ENCODE measurements at regions of chr12 and their contacts with region 1.

Region 1: GRCh38 chr12:10749700-10750384 is 26.7 kb upstream of the YBX3 start:
- DNase-seq: peak; percentile 66 to 90
- ATAC-seq: peak; percentile 96
- H3K4me3 ChIP-seq: peak overlapping the region; percentile 37; the same call in 2 of the 3 replicates
- H3K27ac ChIP-seq: peak overlapping the region; percentile 24 to 59; a peak in 2 of 6 replicates
- H3K4me1 ChIP-seq: no peaks in the 10 kb centered on the region
- CTCF ChIP-seq: peak; percentile 99
- EP300 ChIP-seq: no peak
- POLR2A ChIP-seq: no peak
- RAD21 ChIP-seq: peak; percentile 86 to 89

Region 2: GRCh38 chr12:10701131-10701681 is 48.6 kb before region 1 on chr12:
- CTCF ChIA-PET with region 1: interaction called, 11 read pairs
- POLR2A ChIA-PET with region 1: no interaction called
- DNase-seq: no peak
- ATAC-seq: peak; percentile 27 to 33; a peak in 2 of 6 replicates
- H3K4me3 ChIP-seq: no peak overlapping the region
- H3K27ac ChIP-seq: no peak overlapping the region
- H3K4me1 ChIP-seq: no peaks in the 10 kb centered on the region
- CTCF ChIP-seq: no peak
- EP300 ChIP-seq: no peak
- POLR2A ChIP-seq: no peak
- RAD21 ChIP-seq: no peak

Region 3: DNA sequence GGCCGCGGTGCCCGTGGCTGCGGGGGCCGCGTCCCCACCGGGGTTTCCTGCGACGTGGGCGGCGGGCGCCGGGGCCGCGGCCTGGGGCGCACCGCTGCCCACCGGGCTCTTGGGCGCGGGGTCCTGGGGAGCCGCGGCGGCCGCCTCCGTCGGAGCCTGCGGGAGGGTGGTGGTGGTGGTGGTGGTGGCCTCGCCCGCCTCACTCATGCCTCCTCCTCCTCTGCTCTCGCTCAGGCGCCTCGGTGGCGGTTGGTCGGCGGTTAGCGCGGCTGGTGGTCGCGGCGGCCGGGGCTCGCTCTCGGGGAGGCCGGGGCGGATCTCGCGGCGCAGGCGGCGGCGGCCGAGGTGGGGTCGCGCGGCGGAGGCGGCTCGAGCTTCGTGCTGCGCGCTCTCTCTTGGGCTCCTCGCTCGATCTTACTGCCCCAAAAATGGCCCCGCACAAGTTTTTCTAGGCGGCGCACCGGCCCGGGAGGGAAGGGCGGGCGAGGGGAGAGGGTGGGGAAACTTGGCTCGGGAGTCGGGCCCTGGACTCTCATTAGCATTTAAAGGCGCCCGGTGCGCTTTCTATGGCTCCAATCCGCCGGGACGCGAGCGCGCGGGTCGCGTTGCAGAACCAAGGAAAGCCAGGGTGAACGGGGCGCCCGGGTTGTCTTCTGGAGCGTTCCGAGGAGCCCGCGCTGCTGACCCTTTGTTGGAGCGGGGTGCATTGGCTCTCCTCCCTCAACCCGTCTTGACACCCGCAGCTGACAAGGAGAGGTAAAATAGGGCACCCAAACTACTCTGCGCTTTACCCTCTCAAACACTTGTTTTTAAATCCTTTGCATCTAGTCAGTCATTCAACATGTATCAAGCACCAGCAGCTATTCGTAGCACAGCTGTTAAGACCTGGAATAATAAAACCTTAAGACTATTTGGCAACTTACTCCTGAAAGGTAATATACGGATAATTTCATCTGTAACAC is 26.7 kb before region 1 on chr12 and contains the start of gene YBX3:
- CTCF ChIA-PET with region 1: interaction called, 11 read pairs
- POLR2A ChIA-PET with region 1: interaction called, 3 read pairs
- DNase-seq: peak; percentile 85 to 88
- ATAC-seq: peak; percentile 75 to 84
- H3K4me3 ChIP-seq: peak within 1 kb of the TSS; percentile 93
- H3K27ac ChIP-seq: peak within 1 kb of the TSS; percentile 94 to 99
- H3K4me1 ChIP-seq: peaks cover 36% of the 10 kb centered on the region
- CTCF ChIP-seq: no peak
- EP300 ChIP-seq: no peak
- POLR2A ChIP-seq: peak; percentile 89
- RAD21 ChIP-seq: no peak
- polyA plus RNA-seq, gene YBX3: 136 and 150 TPM in 2 replicates

Region 4: GRCh38 chr12:10730559-10730958 is 19.3 kb before region 1 on chr12:
- CTCF ChIA-PET with region 1: interaction called, 51 read pairs
- POLR2A ChIA-PET with region 1: no interaction called
- DNase-seq: no peak
- ATAC-seq: no peak
- H3K4me3 ChIP-seq: no peak overlapping the region
- H3K27ac ChIP-seq: no peak overlapping the region
- H3K4me1 ChIP-seq: no peaks in the 10 kb centered on the region
- CTCF ChIP-seq: no peak
- EP300 ChIP-seq: no peak
- POLR2A ChIP-seq: no peak
- RAD21 ChIP-seq: no peak

Measured in A549 (cell line).